ENCODE measurements at regions of chr15 and their contacts with region 1.

Region 1: GRCh38 chr15:59501597-59501996 is 63.6 kb downstream of the FAM81A start:
- DNase-seq: peak; percentile 69
- ATAC-seq: peak; percentile 98
- H3K4me3 ChIP-seq: no peak overlapping the region
- H3K27ac ChIP-seq: no peak overlapping the region
- H3K4me1 ChIP-seq: no peaks in the 10 kb centered on the region
- H3K27me3 ChIP-seq: no peaks in the 10 kb centered on the region
- CTCF ChIP-seq: peak; percentile 73 to 89 (median 80); a peak in 5 of 6 replicates
- POLR2A ChIP-seq: no peak
- RAD21 ChIP-seq: peak; percentile 88

Region 2: GRCh38 chr15:59160880-59161593 is 340.6 kb before region 1 on chr15:
- CTCF ChIA-PET with region 1: interaction called, 5 read pairs
- POLR2A ChIA-PET with region 1: no interaction called
- RAD21 ChIA-PET with region 1: interaction called in 1 of 2 experiments, 3 read pairs
- intact Hi-C with region 1: loop called (anchors 2 kb)
- DNase-seq: no peak
- ATAC-seq: peak; percentile 98
- H3K4me3 ChIP-seq: no peak overlapping the region
- H3K27ac ChIP-seq: no peak overlapping the region
- H3K4me1 ChIP-seq: peaks cover 8 to 9% of the 10 kb centered on the region in 2 experiments
- H3K27me3 ChIP-seq: no peaks in the 10 kb centered on the region
- CTCF ChIP-seq: peak; percentile 75 to 82 (median 76)
- POLR2A ChIP-seq: no peak
- RAD21 ChIP-seq: peak; percentile 74

Region 3: GRCh38 chr15:59174835-59175831 is 326.5 kb before region 1 on chr15:
- CTCF ChIA-PET with region 1: interaction called, 14 read pairs
- POLR2A ChIA-PET with region 1: no interaction called
- RAD21 ChIA-PET with region 1: interaction called in 1 of 2 experiments, 3 read pairs
- intact Hi-C with region 1: no loop called
- DNase-seq: peak; percentile 74
- ATAC-seq: peak; percentile 96
- H3K4me3 ChIP-seq: no peak overlapping the region
- H3K27ac ChIP-seq: no peak overlapping the region; the same call in 1 of the 2 replicates
- H3K4me1 ChIP-seq: peaks cover 9 to 24% of the 10 kb centered on the region in 2 experiments
- H3K27me3 ChIP-seq: no peaks in the 10 kb centered on the region
- CTCF ChIP-seq: peak; percentile 70 to 74 (median 72)
- POLR2A ChIP-seq: no peak
- RAD21 ChIP-seq: peak; percentile 84

Region 4: DNA sequence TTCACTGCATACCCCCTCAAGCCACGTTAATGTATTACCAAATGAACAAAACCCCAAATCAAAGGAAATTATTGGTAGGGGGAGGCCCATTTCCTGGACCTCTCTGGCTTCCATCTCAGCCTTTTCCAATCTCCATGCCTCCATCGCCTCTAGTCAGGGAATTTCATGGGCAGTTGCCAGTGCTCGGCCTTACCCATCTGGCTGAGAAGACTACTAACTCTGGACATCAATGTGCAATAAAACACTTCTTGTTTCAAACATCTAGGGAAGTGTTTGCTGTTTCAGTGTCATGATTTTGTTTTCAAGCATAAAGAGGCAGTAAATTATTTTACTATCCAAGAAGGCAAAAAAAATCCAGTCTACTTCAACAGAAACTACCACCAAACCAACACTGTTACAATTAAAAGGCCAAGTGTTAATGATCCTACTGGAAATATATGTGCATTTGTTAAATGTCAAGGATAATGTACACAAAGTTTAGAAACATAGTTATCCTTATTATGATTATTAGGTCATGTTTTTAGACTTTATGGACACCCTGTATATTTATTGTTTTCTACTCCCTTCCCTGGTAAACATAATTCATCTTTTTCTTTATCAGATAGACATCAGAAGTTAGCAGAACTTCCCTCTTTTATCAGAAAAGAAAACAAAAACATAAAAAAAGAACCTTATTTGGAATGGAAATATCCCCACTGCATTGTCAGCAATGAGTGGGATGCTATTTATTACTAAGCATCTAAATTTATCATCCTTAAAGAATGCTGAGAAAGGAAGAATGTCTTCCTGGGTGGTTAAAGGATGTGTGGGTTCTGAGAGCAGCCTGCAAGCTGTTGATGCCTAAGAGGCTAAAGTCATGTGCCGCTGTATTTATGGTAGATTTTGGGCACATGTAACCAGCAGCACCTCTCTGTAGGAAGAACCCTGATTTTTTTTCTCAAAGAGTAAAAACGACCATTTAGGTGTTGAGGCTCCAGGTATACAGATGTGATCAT is 279.8 kb before region 1 on chr15:
- CTCF ChIA-PET with region 1: no interaction called
- POLR2A ChIA-PET with region 1: no interaction called
- RAD21 ChIA-PET with region 1: no interaction called
- intact Hi-C with region 1: no loop called
- DNase-seq: no peak
- ATAC-seq: no peak
- H3K4me3 ChIP-seq: no peak overlapping the region
- H3K27ac ChIP-seq: no peak overlapping the region
- H3K4me1 ChIP-seq: no peaks in the 10 kb centered on the region
- H3K27me3 ChIP-seq: no peaks in the 10 kb centered on the region
- CTCF ChIP-seq: no peak
- POLR2A ChIP-seq: no peak
- RAD21 ChIP-seq: no peak

Measured in HCT116 (cell line).